ENCODE measurements at regions of chr11 and their contacts with region 1.

Region 1: DNA sequence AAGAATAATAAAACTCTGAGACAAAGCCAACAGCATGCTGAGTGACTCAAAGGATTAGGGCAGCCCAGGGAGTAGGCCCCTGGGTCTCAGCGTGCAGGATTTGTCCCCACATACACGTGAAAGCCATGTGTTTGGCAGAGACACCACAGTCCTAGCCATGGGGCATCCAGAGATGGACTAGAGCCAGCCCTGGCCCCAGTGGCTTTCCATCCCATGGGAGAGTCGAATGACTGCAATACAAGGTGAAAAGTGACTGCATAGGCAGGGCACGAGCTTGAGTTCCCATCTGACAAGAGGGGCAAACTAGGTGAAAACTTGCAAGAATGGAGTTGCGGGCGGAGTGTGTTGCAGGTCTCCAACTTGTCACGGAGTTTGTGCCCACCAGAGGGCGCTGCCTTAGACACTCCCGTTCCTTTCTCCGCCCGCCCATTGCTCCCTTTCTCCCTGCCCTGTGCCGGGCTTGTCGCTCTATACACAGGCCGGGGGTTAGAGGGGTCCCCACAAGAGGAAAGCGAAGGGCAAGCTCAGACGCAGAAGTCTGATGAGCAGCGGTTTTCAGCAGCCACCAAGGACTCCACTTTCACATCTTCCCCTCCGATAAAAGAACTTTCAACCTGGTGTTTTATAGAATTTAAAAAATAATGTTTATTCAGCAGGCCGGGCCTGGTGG is 24.2 kb downstream of the TSKU start:
- DNase-seq: peak; percentile 95
- ATAC-seq: peak; percentile 93
- H3K4me3 Mint-ChIP-seq: no peak overlapping the region
- H3K27ac Mint-ChIP-seq: no peak overlapping the region
- H3K4me1 Mint-ChIP-seq: peaks cover 12% of the 10 kb centered on the region
- H3K27me3 Mint-ChIP-seq: no peaks in the 10 kb centered on the region; the same call in 1 of the 2 replicates
- CTCF ChIP-seq: peak; percentile 76

Region 2: DNA sequence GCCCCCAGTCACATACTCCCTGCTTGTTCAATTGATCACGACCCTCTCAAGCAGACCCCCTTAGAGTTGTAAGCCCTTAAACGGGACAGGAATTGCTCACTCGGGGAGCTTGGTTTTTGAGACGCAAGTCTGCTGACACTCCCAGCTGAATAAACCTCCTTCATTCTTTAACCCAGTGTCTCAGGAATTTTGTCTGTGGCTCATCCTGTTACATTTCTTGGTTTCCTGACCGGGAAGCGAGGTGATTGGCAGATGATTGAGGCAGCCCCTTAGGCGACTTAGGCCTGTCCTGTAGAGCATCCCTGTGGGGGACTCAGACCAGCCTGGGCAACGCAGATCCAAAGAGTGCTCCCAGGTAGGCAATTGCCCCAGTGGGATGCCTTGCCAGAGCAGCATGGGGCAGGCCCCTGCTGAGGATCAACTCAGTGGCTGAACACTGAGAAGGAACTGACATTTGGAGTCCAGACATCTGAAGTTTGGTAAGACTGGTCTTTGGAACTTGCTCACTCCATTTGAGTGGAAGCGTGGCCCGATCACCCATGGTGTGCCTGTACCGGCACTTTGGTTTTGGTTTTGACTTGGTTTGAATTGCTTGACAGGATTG is 1767.1 kb before region 1 on chr11:
- CTCF ChIA-PET with region 1: no interaction called
- POLR2A ChIA-PET with region 1: no interaction called
- DNase-seq: no peak
- ATAC-seq: no peak
- H3K4me3 Mint-ChIP-seq: no peak overlapping the region
- H3K27ac Mint-ChIP-seq: no peak overlapping the region
- H3K4me1 Mint-ChIP-seq: 0 out of 2 replicates have a peak, but pooled peaks cover 5% of the 10 kb centered on the region
- H3K27me3 Mint-ChIP-seq: peaks cover 11% of the 10 kb centered on the region
- CTCF ChIP-seq: no peak

Region 3: DNA sequence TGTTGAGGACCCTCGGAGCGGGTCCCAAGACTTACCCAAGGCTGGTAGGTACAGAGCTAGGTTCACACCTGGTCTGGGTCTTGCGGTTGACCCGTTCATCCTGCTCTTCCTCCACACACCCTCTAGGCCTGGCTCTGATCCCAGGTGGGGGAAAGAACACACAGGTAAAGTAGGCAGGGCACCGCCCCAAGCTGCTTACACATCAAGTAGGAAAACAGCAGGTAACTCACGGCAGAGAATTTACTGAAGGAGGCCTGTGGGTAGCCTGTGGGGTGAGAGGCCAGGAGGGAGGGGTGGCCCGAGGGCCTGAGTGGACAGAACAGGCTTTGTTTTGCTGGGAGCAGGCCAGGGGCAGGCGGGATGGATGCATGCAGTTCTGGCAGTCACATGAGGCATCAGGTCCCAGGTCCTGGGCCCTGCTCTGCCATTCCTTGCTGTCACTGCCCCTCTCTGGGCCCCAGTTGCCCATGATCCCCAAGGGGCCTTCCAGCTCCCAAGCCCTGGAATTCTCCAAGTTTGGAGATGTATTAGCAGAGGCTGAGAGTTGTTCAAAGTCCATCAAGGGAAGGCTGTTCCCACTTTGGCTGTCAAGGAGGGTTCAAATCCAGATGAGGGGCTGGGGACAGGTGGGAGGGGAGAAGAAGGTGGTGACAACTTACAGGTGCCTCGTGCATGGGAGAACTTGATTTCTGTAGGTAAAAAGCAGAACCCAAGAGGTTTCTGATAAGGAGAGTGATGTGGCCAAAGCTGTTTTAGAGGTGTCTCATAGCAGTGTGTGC is 18.5 kb before region 1 on chr11:
- CTCF ChIA-PET with region 1: interaction called, 10 read pairs
- POLR2A ChIA-PET with region 1: no interaction called
- DNase-seq: no peak
- ATAC-seq: no peak
- H3K4me3 Mint-ChIP-seq: no peak overlapping the region
- H3K27ac Mint-ChIP-seq: peak overlapping the region; percentile 60; the same call in 1 of the 2 replicates
- H3K4me1 Mint-ChIP-seq: peaks cover 72% of the 10 kb centered on the region
- H3K27me3 Mint-ChIP-seq: no peaks in the 10 kb centered on the region
- CTCF ChIP-seq: no peak

Region 4: GRCh38 chr11:76835928-76836612 is 28.7 kb after region 1 on chr11:
- CTCF ChIA-PET with region 1: interaction called, 19 read pairs
- POLR2A ChIA-PET with region 1: no interaction called
- DNase-seq: no peak
- ATAC-seq: no peak
- H3K4me3 Mint-ChIP-seq: no peak overlapping the region
- H3K27ac Mint-ChIP-seq: no peak overlapping the region
- H3K4me1 Mint-ChIP-seq: peaks cover 10% of the 10 kb centered on the region
- H3K27me3 Mint-ChIP-seq: no peaks in the 10 kb centered on the region
- CTCF ChIP-seq: no peak

Region 5: GRCh38 chr11:76903329-76903728 is 96.0 kb after region 1 on chr11:
- CTCF ChIA-PET with region 1: no interaction called
- POLR2A ChIA-PET with region 1: no interaction called
- DNase-seq: peak; percentile 15
- ATAC-seq: peak; percentile 87
- H3K4me3 Mint-ChIP-seq: peak overlapping the region; percentile 39; the same call in 1 of the 2 replicates
- H3K27ac Mint-ChIP-seq: peak overlapping the region; percentile 86; the same call in 1 of the 2 replicates
- H3K4me1 Mint-ChIP-seq: peaks cover 34% of the 10 kb centered on the region
- H3K27me3 Mint-ChIP-seq: no peaks in the 10 kb centered on the region
- CTCF ChIP-seq: no peak